ENCODE measurements at regions of chr6 and their contacts with region 1.

Region 1: GRCh38 chr6:82144007-82144851 is 103.3 kb downstream of the IBTK start:
- DNase-seq: peak; percentile 91
- H3K4me3 Mint-ChIP-seq: peak overlapping the region; percentile 57
- H3K27ac Mint-ChIP-seq: peak overlapping the region; percentile 89
- H3K4me1 Mint-ChIP-seq: peaks cover 25% of the 10 kb centered on the region
- H3K27me3 Mint-ChIP-seq: no peaks in the 10 kb centered on the region
- CTCF ChIP-seq: no peak

Region 2: GRCh38 chr6:82131441-82131840 is 12.8 kb before region 1 on chr6:
- CTCF ChIA-PET with region 1: interaction called, 4 read pairs
- POLR2A ChIA-PET with region 1: interaction called, 12 read pairs
- intact Hi-C with region 1: no loop called
- DNase-seq: no peak
- H3K4me3 Mint-ChIP-seq: no peak overlapping the region
- H3K27ac Mint-ChIP-seq: no peak overlapping the region
- H3K4me1 Mint-ChIP-seq: no peaks in the 10 kb centered on the region
- H3K27me3 Mint-ChIP-seq: no peaks in the 10 kb centered on the region
- CTCF ChIP-seq: no peak

Measured in MCF 10A (cell line).